ENCODE measurements at regions of chr4 and their contacts with region 1.

Region 1: GRCh38 chr4:23022032-23022431 is 329.3 kb downstream of the GBA3 start:
- DNase-seq: peak; percentile 71 to 84
- H3K4me3 ChIP-seq: no peak overlapping the region
- H3K27ac ChIP-seq: peak overlapping the region; percentile 96
- H3K4me1 ChIP-seq: peaks cover 16% of the 10 kb centered on the region
- H3K27me3 ChIP-seq: no peaks in the 10 kb centered on the region
- CTCF ChIP-seq: no peak

Region 2: GRCh38 chr4:22969314-22969896 is 52.6 kb before region 1 on chr4:
- CTCF ChIA-PET with region 1: no interaction called
- POLR2A ChIA-PET with region 1: no interaction called
- intact Hi-C with region 1: loop called (anchors 2 kb)
- DNase-seq: peak in 1 of 2 experiments; percentile 64
- H3K4me3 ChIP-seq: no peak overlapping the region
- H3K27ac ChIP-seq: peak overlapping the region; percentile 65
- H3K4me1 ChIP-seq: peaks cover 21% of the 10 kb centered on the region
- H3K27me3 ChIP-seq: no peaks in the 10 kb centered on the region
- CTCF ChIP-seq: no peak

Region 3: DNA sequence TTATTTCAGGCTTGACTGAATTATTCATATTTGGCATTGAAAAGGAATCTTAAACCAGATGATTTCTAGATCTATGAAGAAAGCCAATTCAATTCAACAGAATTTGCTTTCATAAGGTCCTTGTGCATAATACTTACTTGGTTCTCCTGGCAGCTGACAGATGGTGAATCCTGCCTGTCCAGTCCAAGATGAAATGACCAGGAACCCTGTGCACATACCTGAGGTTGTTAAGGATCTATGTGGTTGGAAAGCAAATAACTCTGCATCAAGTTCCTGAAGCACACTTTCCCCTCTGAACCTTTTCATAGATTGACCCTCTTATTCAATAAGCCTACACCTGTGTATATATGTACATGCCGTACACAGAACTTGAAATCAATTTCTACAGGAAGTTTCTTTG is 305.1 kb after region 1 on chr4:
- CTCF ChIA-PET with region 1: no interaction called
- POLR2A ChIA-PET with region 1: no interaction called
- intact Hi-C with region 1: loop called (anchors 1 kb)
- DNase-seq: no peak
- H3K4me3 ChIP-seq: no peak overlapping the region
- H3K27ac ChIP-seq: no peak overlapping the region
- H3K4me1 ChIP-seq: 0 out of 2 replicates have a peak, but pooled peaks cover 4% of the 10 kb centered on the region
- H3K27me3 ChIP-seq: no peaks in the 10 kb centered on the region
- CTCF ChIP-seq: no peak

Region 4: DNA sequence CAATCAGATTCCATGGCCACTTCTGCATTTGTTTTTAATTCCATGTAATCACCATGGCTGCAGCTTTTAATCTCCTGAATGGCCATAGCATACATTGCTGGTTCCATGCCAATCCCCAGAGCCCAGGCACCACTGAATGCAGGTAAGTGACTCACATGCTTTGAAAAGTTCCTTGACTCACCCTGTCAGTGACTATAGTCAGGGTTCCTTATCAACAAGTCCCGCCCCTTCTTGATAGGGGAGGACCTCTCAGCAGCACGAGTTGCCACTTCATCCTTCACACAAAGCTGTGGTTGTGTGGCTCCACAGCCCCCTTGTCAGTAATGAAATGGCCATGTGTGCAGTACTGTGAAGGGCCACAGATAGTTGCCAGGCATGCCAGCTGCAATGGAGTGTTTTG is 351.2 kb after region 1 on chr4:
- CTCF ChIA-PET with region 1: no interaction called
- POLR2A ChIA-PET with region 1: interaction called, 4 read pairs
- intact Hi-C with region 1: loop called (anchors 5 kb)
- DNase-seq: peak; percentile 72 to 83
- H3K4me3 ChIP-seq: no peak overlapping the region
- H3K27ac ChIP-seq: no peak overlapping the region
- H3K4me1 ChIP-seq: no peaks in the 10 kb centered on the region; the same call in 1 of the 2 replicates
- H3K27me3 ChIP-seq: no peaks in the 10 kb centered on the region
- CTCF ChIP-seq: no peak